Activated CD4-positive, alpha-beta T cell treated with anti-CD3 and anti-CD28 coated beads for 36 hours (primary cell): ENCODE measurements at regions of chr19 and their contacts with region 1.

Region 1: GRCh38 chr19:12681074-12681951 is at the start of gene DHPS:
- DNase-seq: peak; percentile 94
- ATAC-seq: peak; percentile 90
- H3K4me3 Mint-ChIP-seq: peak within 1 kb of the TSS; percentile 99
- H3K27ac Mint-ChIP-seq: peak within 1 kb of the TSS; percentile 97
- H3K4me1 Mint-ChIP-seq: peaks cover 23% of the 10 kb centered on the region
- H3K27me3 Mint-ChIP-seq: no peaks in the 10 kb centered on the region
- total RNA-seq, gene DHPS: 101 to 112 TPM

Region 2: DNA sequence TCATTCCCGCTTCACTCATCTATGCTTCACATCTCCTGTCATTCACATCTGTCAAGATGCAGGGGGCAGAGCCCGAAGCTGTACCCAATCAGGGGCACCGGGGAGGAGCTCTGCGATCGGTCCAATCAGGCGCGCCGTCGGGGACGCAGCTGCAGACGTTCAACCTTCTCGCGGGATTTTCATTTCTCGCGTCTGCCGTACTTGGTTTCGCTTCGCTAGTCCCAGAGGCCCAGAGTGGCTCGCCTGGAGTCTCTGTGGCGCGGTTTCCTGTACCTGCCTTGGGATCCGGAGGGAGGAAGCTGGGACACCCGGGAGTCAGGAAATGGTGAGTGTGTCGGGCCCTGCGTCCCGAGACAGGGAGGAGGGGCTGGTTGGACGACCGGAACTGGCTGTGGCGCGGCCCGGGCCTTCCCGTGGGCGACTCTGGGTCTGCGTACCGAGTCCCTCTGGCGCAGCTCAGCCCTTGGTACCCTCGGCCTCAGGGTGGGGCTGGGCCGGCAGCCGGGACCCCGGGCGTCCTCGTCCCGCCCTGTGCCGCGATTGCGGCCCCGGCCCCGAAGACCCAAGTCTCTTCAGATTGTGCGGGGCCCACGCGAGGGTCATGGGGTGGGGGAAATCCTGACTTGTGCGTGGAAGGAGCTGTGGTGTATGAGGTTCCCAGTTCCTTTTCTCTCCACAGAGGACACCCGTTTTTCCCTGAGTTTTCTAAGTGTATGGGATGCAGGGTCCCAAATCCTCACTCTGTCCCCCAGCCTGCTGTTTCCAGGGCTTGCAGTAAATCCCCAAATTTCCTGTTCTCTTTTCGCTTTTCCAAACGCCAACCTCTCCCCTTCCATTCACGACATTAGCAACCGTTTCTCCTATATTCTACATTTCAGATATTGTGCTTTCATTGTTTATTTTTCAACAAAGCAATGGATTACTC is 518.2 kb before region 1 on chr19 and contains the start of gene ZNF136:
- CTCF ChIA-PET with region 1: no interaction called
- POLR2A ChIA-PET with region 1: no interaction called
- intact Hi-C with region 1: loop called in 1 of 2 experiments (anchors 1 kb)
- DNase-seq: peak; percentile 97
- ATAC-seq: peak; percentile 100
- H3K4me3 Mint-ChIP-seq: peak within 1 kb of the TSS; percentile 98
- H3K27ac Mint-ChIP-seq: peak within 1 kb of the TSS; percentile 99
- H3K4me1 Mint-ChIP-seq: peaks cover 38% of the 10 kb centered on the region
- H3K27me3 Mint-ChIP-seq: no peaks in the 10 kb centered on the region
- total RNA-seq, gene ZNF136: 11.7 to 12.9 TPM

Region 3: DNA sequence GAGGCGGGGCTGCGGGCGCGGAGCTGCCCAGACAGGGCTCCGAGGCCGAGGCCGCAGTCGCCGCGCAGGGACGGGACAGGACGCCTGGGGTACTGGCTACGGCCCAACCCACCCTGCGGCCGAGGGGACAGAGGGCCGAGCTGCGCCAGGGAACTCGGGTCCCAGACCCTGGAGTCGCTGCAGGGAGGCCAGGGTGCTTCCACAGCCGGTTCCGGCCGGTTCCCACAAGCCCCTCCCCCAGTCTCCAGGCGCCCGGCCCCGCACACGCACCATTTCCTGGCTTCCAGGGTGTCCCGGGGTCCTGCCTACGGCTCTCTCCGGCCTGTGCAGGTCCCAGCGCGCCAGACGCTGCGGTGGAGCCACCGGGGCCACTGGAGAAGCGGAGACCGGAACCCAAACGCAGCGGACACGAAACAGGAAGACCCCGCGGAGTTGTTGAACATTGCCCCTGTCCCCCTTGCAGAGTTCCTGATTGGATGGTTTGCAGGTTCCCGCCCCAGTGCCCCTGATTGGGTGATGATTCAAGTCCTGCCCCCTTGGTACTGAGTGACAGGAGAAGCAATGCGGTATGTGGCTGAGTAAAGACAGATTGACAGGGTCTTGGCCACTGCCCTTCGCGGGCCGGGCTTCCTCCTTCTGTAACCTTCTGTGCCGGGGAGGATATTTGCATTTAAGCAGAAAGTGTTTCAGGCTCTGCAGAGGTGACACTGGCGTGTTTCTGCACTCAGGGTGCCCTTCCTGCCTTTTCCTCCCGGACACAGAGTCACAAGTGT is 130.1 kb before region 1 on chr19 and contains the start of gene ZNF564:
- CTCF ChIA-PET with region 1: no interaction called
- POLR2A ChIA-PET with region 1: no interaction called
- intact Hi-C with region 1: loop called in 1 of 2 experiments (anchors 1 kb)
- DNase-seq: peak; percentile 94
- ATAC-seq: peak; percentile 99
- H3K4me3 Mint-ChIP-seq: peak within 1 kb of the TSS; percentile 98
- H3K27ac Mint-ChIP-seq: peak within 1 kb of the TSS; percentile 97
- H3K4me1 Mint-ChIP-seq: peaks cover 40% of the 10 kb centered on the region
- H3K27me3 Mint-ChIP-seq: no peaks in the 10 kb centered on the region
- total RNA-seq, gene ZNF564: 5.2 to 5.6 TPM

Region 4: DNA sequence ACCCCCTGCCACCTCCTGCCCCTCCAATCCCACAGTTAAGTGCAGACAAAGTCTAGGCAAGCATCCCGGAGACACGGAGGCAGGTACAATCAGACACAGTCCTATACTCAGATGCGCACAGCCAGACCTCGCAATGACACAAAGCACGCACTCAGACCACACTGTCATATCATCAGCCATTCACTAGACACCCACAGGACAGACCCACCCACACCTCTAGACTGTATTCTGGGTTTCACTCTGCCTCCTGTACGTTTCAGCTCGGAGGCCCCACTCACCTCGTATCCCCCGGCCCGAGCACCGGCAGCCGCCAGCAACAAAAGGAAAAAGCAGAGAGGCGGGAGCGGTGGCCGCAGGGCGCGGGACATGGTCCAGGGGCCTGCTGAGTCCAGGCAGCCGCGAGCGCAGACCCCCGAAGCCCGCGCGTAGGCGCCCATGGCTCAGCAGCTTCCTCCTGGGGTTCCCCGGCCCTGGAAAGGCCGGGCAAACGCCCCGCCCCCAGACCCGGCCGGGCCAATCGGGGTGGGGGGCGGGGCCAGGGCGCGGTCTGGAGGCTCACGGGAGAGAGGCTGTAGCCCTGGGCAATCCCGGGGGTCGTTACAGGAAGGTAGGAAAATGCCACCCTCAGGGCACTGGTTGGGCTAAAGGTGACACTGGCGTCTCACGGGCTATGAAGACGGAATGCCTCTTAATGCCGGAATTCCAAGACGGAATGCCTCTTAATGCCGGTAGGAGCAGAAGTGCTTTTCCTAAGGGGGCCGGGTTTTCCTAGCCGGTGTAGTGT is 14.9 kb before region 1 on chr19 and contains the starts of genes MAN2B1 and WDR83:
- CTCF ChIA-PET with region 1: interaction called, 9 read pairs
- POLR2A ChIA-PET with region 1: interaction called, 6 read pairs
- intact Hi-C with region 1: loop called (anchors 1 kb)
- DNase-seq: peak; percentile 90
- ATAC-seq: peak; percentile 73
- H3K4me3 Mint-ChIP-seq: peak within 1 kb of the TSS; percentile 86
- H3K27ac Mint-ChIP-seq: peak within 1 kb of the TSS; percentile 83
- H3K4me1 Mint-ChIP-seq: peaks cover 43% of the 10 kb centered on the region
- H3K27me3 Mint-ChIP-seq: no peaks in the 10 kb centered on the region
- total RNA-seq, gene MAN2B1: 118 to 154 TPM
- total RNA-seq, gene WDR83: 13.5 to 19.5 TPM

Region 5: GRCh38 chr19:12705654-12706331 is 24.5 kb after region 1 on chr19:
- CTCF ChIA-PET with region 1: no interaction called
- POLR2A ChIA-PET with region 1: no interaction called
- intact Hi-C with region 1: no loop called
- DNase-seq: no peak
- ATAC-seq: no peak
- H3K4me3 Mint-ChIP-seq: no peak overlapping the region
- H3K27ac Mint-ChIP-seq: no peak overlapping the region
- H3K4me1 Mint-ChIP-seq: no peaks in the 10 kb centered on the region
- H3K27me3 Mint-ChIP-seq: no peaks in the 10 kb centered on the region

Region 6: GRCh38 chr19:12722566-12723380 is 41.5 kb after region 1 on chr19:
- CTCF ChIA-PET with region 1: interaction called, 7 read pairs
- POLR2A ChIA-PET with region 1: interaction called, 4 read pairs
- intact Hi-C with region 1: loop called (anchors 1 kb)
- DNase-seq: peak; percentile 97
- ATAC-seq: peak; percentile 84
- H3K4me3 Mint-ChIP-seq: peak overlapping the region; percentile 99
- H3K27ac Mint-ChIP-seq: peak overlapping the region; percentile 90
- H3K4me1 Mint-ChIP-seq: peaks cover 35% of the 10 kb centered on the region
- H3K27me3 Mint-ChIP-seq: no peaks in the 10 kb centered on the region

Region 7: GRCh38 chr19:12806239-12807081 is 125.1 kb after region 1 on chr19 and contains the start of gene RNASEH2A:
- CTCF ChIA-PET with region 1: no interaction called
- POLR2A ChIA-PET with region 1: no interaction called
- intact Hi-C with region 1: loop called in 1 of 2 experiments (anchors 1 kb)
- DNase-seq: peak; percentile 94
- ATAC-seq: peak; percentile 93
- H3K4me3 Mint-ChIP-seq: peak within 1 kb of the TSS; percentile 89
- H3K27ac Mint-ChIP-seq: peak within 1 kb of the TSS; percentile 80
- H3K4me1 Mint-ChIP-seq: peaks cover 24% of the 10 kb centered on the region
- H3K27me3 Mint-ChIP-seq: no peaks in the 10 kb centered on the region
- total RNA-seq, gene RNASEH2A: 27.0 to 51.1 TPM

Region 8: DNA sequence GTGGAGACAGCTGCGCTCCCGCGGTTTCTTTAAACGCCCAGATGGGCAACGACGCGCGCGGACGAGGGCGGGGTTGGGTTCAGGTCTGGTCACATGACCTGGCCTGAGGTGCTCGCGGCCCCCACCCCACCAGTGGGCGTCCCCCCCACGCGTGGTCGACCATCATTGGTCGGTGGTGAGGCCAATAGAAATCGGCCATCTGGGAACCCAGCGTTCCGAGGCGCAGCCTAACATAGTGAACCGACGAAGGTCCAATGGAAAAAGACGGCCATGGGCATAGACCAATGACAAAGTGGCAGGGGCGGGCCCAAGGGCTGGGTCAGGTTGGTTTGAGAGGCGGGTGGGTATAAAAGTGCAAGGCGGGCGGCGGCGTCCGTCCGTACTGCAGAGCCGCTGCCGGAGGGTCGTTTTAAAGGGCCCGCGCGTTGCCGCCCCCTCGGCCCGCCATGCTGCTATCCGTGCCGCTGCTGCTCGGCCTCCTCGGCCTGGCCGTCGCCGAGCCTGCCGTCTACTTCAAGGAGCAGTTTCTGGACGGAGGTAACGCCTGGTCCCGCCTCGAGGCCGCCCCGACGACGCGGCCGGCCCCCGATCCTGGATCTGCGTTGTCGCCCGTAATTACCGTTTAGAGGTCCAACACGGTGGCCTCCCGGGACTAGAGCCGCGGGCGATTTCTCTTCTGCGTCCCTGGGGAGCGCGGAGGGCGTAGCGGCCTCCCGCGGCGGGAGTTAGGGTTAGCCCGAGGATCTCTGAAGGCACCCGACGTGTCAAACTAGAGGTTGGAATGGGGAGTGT is 257.1 kb after region 1 on chr19 and contains the start of gene CALR:
- CTCF ChIA-PET with region 1: no interaction called
- POLR2A ChIA-PET with region 1: no interaction called
- intact Hi-C with region 1: loop called in 1 of 2 experiments (anchors 1 kb)
- DNase-seq: peak; percentile 99
- ATAC-seq: peak; percentile 89
- H3K4me3 Mint-ChIP-seq: peak within 1 kb of the TSS; percentile 99
- H3K27ac Mint-ChIP-seq: peak within 1 kb of the TSS; percentile 96
- H3K4me1 Mint-ChIP-seq: peaks cover 59% of the 10 kb centered on the region
- H3K27me3 Mint-ChIP-seq: no peaks in the 10 kb centered on the region
- total RNA-seq, gene CALR: 557 to 569 TPM